ENCODE measurements at regions of chr7 and their contacts with region 1.

Region 1: GRCh38 chr7:109772161-109772560 is 1202.5 kb downstream of the DNAJB9 start:
- DNase-seq: no peak
- H3K4me3 ChIP-seq: no peak overlapping the region
- H3K27ac ChIP-seq: no peak overlapping the region
- H3K4me1 ChIP-seq: no peaks in the 10 kb centered on the region
- H3K27me3 ChIP-seq: no peaks in the 10 kb centered on the region
- CTCF ChIP-seq: no peak
- POLR2A ChIP-seq: no peak

Region 2: DNA sequence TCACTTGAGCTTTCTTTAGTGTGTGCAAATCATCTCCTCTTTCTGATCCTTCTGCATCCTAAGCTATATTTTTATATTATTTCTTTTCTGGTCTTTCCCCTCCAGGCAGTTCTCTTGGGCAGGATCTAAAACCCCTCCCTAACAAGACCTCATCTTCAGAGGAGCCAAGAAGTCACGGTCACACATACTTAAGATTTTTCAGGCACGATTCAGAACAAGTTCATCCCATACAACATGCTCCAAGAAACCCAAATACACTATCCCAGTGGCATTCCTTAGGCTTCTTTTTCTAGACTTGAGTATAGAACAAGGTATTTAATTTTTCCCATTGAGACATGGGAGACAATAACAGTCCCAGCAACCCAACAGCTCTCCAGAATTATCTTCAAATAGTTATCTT is 49.0 kb after region 1 on chr7:
- intact Hi-C with region 1: loop called (anchors 10 kb)
- DNase-seq: no peak
- H3K4me3 ChIP-seq: no peak overlapping the region
- H3K27ac ChIP-seq: no peak overlapping the region
- H3K4me1 ChIP-seq: no peaks in the 10 kb centered on the region
- H3K27me3 ChIP-seq: no peaks in the 10 kb centered on the region
- CTCF ChIP-seq: no peak
- POLR2A ChIP-seq: no peak

Region 3: GRCh38 chr7:109984729-109985128 is 212.6 kb after region 1 on chr7:
- intact Hi-C with region 1: no loop called
- DNase-seq: no peak
- H3K4me3 ChIP-seq: no peak overlapping the region
- H3K27ac ChIP-seq: no peak overlapping the region
- H3K4me1 ChIP-seq: no peaks in the 10 kb centered on the region
- H3K27me3 ChIP-seq: no peaks in the 10 kb centered on the region
- CTCF ChIP-seq: no peak
- POLR2A ChIP-seq: no peak